H1 (cell line): ENCODE measurements at regions of chr9 and their contacts with region 1.

Region 1: GRCh38 chr9:109182940-109183798 is 16.1 kb upstream of the FRRS1L start:
- DNase-seq: peak in 1 of 2 experiments; percentile 58
- H3K4me3 ChIP-seq: no peak overlapping the region
- H3K27ac ChIP-seq: no peak overlapping the region
- H3K4me1 ChIP-seq: 0 out of 7 replicates have a peak, but pooled peaks cover 0 to 2% (median 0%) of the 10 kb centered on the region in 4 experiments
- H3K27me3 ChIP-seq: no peaks in the 10 kb centered on the region
- CTCF ChIP-seq: peak; percentile 47 to 66 (median 59)
- EP300 ChIP-seq: no peak
- POLR2A ChIP-seq: no peak
- RAD21 ChIP-seq: peak; percentile 42 to 53; a peak in 3 of 4 replicates

Region 2: DNA sequence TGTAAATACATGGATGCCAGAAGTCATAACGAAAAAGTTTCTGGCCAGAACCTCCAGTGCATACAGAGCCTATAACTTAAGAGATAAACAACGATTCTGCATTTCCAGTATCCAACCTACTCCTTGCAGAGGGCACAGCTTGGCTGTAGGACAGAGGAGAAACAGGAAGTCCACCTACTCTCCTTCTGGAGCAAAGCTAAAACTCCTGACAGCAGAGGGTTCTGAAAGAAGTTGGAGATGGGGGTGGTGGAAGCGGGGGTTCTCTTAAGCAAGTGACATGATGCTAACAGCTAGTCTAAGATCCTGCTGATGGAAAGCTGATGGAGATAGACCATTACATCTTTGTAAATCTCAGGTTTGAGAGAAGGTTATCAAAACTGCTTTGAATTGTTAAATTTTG is 134.3 kb before region 1 on chr9:
- CTCF ChIA-PET with region 1: no interaction called
- POLR2A ChIA-PET with region 1: no interaction called
- DNase-seq: no peak
- H3K4me3 ChIP-seq: no peak overlapping the region
- H3K27ac ChIP-seq: no peak overlapping the region
- H3K4me1 ChIP-seq: peaks cover 0 to 1% (median 0%) of the 10 kb centered on the region in 4 experiments; a peak in 1 of 7 replicates
- H3K27me3 ChIP-seq: no peaks in the 10 kb centered on the region
- CTCF ChIP-seq: no peak
- EP300 ChIP-seq: no peak
- POLR2A ChIP-seq: no peak
- RAD21 ChIP-seq: no peak

Region 3: GRCh38 chr9:109063760-109064159 is 119.4 kb before region 1 on chr9:
- CTCF ChIA-PET with region 1: no interaction called
- POLR2A ChIA-PET with region 1: no interaction called
- DNase-seq: no peak
- H3K4me3 ChIP-seq: no peak overlapping the region
- H3K27ac ChIP-seq: no peak overlapping the region
- H3K4me1 ChIP-seq: no peaks in the 10 kb centered on the region
- H3K27me3 ChIP-seq: no peaks in the 10 kb centered on the region
- CTCF ChIP-seq: no peak
- EP300 ChIP-seq: no peak
- POLR2A ChIP-seq: no peak
- RAD21 ChIP-seq: no peak

Region 4: DNA sequence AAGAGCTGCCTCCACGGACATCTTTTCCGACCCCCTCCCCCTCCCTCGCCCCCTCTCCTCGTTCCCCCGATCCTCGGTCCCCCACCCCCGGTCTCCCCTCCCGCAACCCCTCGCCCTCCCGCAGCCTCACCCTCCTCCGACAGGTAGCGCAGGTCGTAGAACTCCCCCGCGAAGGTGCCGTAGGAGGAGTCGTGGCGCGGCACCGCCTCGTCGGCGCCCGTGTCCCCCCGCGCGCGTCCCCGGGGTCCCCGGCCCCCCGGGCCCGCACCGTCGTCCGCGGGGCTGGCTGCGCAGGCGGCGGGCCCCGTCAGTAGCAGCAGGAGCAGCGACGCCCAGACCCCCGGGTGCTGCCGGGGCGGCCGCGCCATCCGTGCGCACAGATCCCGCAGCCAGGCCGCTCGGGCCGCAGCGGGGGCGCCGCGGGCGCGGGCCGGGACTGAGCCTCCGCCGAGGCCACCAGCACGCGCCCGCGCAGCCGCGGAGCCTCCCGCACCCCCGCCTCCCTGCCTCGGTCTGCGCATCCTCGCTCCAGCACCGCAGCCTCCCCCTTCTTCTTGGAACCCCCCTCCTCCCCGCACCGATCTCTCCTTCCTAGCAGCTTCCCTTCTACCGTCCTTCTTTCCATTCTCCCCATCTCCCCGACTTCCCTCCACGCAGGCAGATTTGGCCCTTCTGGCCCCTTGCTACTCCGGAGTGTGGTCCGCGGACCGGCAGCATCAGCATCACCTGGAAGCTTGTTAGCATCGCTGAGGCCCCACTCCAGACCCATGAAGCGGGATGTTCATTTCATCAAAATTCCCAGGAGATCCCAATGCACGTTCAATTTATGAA is 16.2 kb before region 1 on chr9 and contains the start of gene FRRS1L:
- CTCF ChIA-PET with region 1: interaction called, 35 read pairs
- POLR2A ChIA-PET with region 1: no interaction called
- DNase-seq: peak in 1 of 2 experiments; percentile 66
- H3K4me3 ChIP-seq: peak within 1 kb of the TSS; percentile 45 to 67 (median 54)
- H3K27ac ChIP-seq: no peak within 1 kb of the TSS
- H3K4me1 ChIP-seq: peaks cover 0 to 2% (median 0%) of the 10 kb centered on the region in 4 experiments; a peak in 2 of 7 replicates
- H3K27me3 ChIP-seq: peaks cover 6 to 23% (median 18%) of the 10 kb centered on the region in 4 experiments
- CTCF ChIP-seq: no peak
- EP300 ChIP-seq: no peak
- POLR2A ChIP-seq: no peak
- RAD21 ChIP-seq: no peak
- total RNA-seq, gene FRRS1L: 2.1 and 2.2 TPM in 2 replicates

Region 5: DNA sequence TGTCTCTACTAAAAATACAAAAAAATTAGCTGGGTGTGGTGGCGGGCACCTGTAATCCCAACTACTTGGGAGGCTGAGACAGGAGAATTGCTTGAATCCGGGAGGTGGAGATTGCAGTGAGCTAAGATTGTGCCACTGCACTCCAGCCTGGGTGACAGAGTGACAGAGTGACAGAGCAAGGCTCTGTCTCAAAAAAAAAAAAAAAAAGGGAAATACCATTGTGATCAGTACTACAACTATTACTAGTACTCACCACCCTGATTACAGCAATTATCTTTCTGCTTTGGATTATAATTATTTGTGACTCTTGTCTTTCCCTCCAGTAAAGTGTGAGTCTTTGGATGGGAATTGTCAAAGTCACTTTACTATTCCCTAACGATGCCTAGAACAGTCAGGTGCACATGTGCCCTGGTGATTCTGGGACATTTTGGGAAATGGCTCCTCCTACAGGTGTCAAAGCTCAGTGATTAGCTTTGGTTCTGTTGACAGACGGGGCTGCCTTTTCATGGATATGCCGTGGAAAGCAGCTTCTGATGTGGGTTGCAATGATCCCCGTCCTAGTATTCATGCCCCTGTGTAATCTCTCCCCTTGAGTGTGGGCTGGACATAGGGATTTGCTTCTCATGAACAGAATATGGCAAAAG is 15.7 kb after region 1 on chr9:
- CTCF ChIA-PET with region 1: interaction called, 36 read pairs
- POLR2A ChIA-PET with region 1: no interaction called
- DNase-seq: no peak
- H3K4me3 ChIP-seq: no peak overlapping the region
- H3K27ac ChIP-seq: no peak overlapping the region
- H3K4me1 ChIP-seq: no peaks in the 10 kb centered on the region
- H3K27me3 ChIP-seq: no peaks in the 10 kb centered on the region
- CTCF ChIP-seq: peak; percentile 35 to 62 (median 48)
- EP300 ChIP-seq: no peak
- POLR2A ChIP-seq: no peak
- RAD21 ChIP-seq: peak; percentile 42 to 58

Region 6: GRCh38 chr9:109206670-109207069 is 23.5 kb after region 1 on chr9:
- CTCF ChIA-PET with region 1: interaction called, 17 read pairs
- POLR2A ChIA-PET with region 1: no interaction called
- DNase-seq: peak in 1 of 2 experiments; percentile 17
- H3K4me3 ChIP-seq: no peak overlapping the region
- H3K27ac ChIP-seq: no peak overlapping the region
- H3K4me1 ChIP-seq: no peaks in the 10 kb centered on the region
- H3K27me3 ChIP-seq: no peaks in the 10 kb centered on the region
- CTCF ChIP-seq: peak; percentile 40 to 54 (median 45)
- EP300 ChIP-seq: no peak
- POLR2A ChIP-seq: no peak
- RAD21 ChIP-seq: peak; percentile 42 to 50; a peak in 2 of 4 replicates

Region 7: DNA sequence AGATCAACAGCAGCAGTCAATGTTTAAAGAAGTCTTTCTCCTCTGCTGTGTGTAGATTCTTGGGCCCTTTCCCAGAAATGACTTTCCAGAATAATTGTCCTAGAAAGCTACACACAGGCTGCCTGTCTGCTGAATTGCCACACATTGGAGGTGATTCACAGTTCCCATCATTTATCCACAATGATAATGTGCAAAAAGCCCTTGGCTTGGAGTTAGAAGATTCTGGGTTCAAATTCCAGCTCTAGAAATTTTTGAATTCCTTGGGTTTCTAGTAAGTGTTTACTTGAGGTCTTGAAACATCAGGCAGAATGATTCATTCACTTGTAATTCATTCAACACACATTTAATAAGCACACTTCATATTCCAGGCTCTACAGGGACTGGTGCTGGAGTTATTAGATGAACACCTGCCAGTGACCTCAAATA is 166.3 kb after region 1 on chr9:
- CTCF ChIA-PET with region 1: interaction called, 31 read pairs
- POLR2A ChIA-PET with region 1: no interaction called
- DNase-seq: no peak
- H3K4me3 ChIP-seq: no peak overlapping the region
- H3K27ac ChIP-seq: no peak overlapping the region
- H3K4me1 ChIP-seq: peaks cover 6 to 9% (median 7%) of the 10 kb centered on the region in 4 experiments; a peak in 5 of 7 replicates
- H3K27me3 ChIP-seq: no peaks in the 10 kb centered on the region
- CTCF ChIP-seq: no peak
- EP300 ChIP-seq: no peak
- POLR2A ChIP-seq: no peak
- RAD21 ChIP-seq: no peak

Region 8: GRCh38 chr9:109401168-109401989 is 218.2 kb after region 1 on chr9:
- CTCF ChIA-PET with region 1: interaction called, 18 read pairs
- POLR2A ChIA-PET with region 1: no interaction called
- DNase-seq: peak; percentile 58 to 87
- H3K4me3 ChIP-seq: no peak overlapping the region; a peak in 1 of 8 replicates
- H3K27ac ChIP-seq: no peak overlapping the region
- H3K4me1 ChIP-seq: peaks cover 0 to 5% (median 1%) of the 10 kb centered on the region in 4 experiments; a peak in 1 of 7 replicates
- H3K27me3 ChIP-seq: no peaks in the 10 kb centered on the region
- CTCF ChIP-seq: peak; percentile 90 to 99 (median 99)
- EP300 ChIP-seq: no peak
- POLR2A ChIP-seq: no peak
- RAD21 ChIP-seq: peak; percentile 88 to 92